A673 (cell line): ENCODE measurements at regions of chr6 and their contacts with region 1.

Region 1: DNA sequence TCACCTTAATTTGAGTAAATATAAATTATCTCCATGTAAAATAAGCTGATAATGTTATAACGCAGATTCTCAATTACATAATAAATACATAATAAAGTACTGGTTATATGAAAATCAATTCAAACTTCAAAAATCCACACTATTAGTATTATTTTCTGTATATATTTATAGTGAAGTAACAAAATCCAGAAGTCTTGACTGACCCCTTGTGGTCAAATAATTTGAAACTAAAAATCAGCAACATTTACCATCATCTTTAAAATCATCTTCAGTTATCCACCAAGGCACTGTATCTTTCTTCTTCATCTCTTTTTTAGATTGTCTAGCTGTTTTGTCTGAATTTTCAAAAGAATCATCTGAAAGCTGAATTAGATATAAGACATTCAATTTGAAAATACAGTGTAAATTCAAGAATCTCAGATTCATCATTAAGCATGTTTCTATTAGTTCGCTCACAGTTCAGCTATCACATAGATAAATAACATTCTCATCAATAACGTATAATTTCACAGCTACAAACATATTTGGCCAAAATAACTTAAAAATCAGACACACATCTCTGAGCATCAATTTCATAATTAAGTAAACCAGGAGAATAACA is 6.5 kb downstream of the CEP162 start:
- DNase-seq: peak; percentile 34
- H3K4me3 ChIP-seq: no peak overlapping the region
- H3K27ac ChIP-seq: no peak overlapping the region
- H3K4me1 ChIP-seq: no peaks in the 10 kb centered on the region
- H3K27me3 ChIP-seq: no peaks in the 10 kb centered on the region
- CTCF ChIP-seq: peak; percentile 69

Region 2: DNA sequence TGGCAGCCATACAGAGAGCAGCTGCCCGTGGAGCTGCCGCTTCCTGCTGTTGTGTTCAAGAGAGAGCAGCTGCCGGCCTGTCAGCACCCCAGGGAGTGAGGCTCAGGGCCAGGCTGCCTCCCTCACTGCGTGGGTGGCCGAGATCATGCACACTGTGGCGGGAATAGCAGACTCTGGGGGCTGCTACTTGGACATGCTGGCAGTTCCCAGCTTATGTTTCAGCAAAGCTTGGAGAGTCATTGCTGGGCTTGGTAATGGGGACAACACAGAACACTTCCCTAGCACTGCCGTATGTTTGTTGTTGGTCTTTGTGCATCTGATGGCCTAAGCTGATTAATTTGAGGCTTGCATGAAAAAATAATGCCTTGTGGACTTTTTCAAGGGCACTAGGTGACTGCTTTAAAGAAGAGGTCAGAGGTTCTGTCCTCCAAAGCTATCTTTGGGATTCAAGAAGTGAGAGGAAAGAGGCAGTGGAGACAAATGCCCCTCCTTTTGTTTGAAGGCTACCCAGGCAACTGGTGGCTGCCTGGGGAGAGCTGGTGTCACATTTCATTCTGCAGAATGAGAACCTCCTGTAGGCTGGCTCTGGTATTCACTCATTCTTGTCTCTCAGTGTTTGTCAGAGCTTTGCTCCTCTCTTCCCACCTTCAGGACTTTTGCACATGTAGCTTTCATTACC is 168.6 kb before region 1 on chr6:
- CTCF ChIA-PET with region 1: no interaction called
- POLR2A ChIA-PET with region 1: no interaction called
- intact Hi-C with region 1: loop called (anchors 5 kb)
- DNase-seq: peak; percentile 88
- H3K4me3 ChIP-seq: peak overlapping the region; percentile 15
- H3K27ac ChIP-seq: peak overlapping the region; percentile 74
- H3K4me1 ChIP-seq: peaks cover 24% of the 10 kb centered on the region
- H3K27me3 ChIP-seq: no peaks in the 10 kb centered on the region
- CTCF ChIP-seq: no peak